ENCODE measurements at regions of chr7 and their contacts with region 1.

Region 1: DNA sequence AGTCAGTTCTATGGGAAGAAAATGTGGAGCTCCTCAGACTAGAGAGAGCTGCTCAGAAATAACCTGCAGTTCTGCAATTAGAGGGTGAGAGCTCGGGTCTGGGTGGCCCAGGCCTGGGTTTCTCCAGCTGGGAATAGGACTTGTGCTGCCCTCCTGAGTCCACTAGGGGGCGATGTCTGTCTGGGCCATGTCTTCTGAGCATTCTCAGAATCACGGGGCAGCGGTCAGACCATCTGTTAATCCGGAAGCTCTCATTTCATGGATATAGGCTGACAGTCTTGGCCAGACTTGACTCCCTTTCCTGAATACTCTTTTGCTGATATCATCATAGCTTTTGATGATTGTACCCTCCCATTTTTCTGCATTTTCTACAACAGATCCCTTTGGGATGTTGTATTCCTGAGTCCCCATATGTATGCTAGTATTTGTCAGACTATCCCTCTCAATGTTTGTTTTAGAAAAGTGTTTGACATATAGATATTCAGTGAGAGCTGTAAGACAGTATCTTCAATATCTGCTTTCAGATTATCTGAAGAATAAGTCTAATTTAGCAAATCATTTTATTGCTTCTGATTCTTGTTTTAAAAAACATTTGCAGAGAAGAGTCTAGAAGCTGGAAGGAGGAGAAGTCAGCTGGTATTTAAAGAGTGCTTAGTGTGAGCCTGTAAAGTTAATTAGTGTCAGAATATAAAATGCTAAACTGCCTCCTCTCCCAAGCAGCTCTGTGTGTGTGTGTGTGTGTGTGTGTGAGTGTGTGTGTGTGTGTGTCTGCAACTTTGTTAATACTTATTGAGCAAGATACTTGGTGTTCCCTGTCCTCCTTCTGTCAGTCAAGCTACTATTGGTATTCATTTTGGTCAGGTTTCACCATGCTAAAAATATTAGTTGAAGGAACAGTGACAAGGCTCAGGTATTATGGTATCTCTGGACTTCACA is 38.0 kb downstream of the STARD3NL start:
- DNase-seq: peak; percentile 69 to 92 (median 82)
- H3K4me3 ChIP-seq: no peak overlapping the region
- H3K27ac ChIP-seq: peak overlapping the region in 2 of 5 donors; percentile 10 to 35
- H3K4me1 ChIP-seq: peaks cover 6 to 15% of the 10 kb centered on the region in 2 donors
- H3K27me3 ChIP-seq: no peaks in the 10 kb centered on the region
- CTCF ChIP-seq: peak; percentile 70 to 92 (median 81)
- POLR2A ChIP-seq: no peak

Region 2: GRCh38 chr7:38318803-38319416 is 102.9 kb after region 1 on chr7:
- intact Hi-C with region 1: loop called in 1 of 2 experiments (anchors 5 kb)
- DNase-seq: peak in 4 of 7 donors; percentile 13 to 63 (median 32)
- H3K4me3 ChIP-seq: no peak overlapping the region
- H3K27ac ChIP-seq: no peak overlapping the region
- H3K4me1 ChIP-seq: no peaks in the 10 kb centered on the region
- H3K27me3 ChIP-seq: no peaks in the 10 kb centered on the region
- CTCF ChIP-seq: peak in 5 of 6 experiments; percentile 28 to 53 (median 46)
- POLR2A ChIP-seq: no peak

Region 3: DNA sequence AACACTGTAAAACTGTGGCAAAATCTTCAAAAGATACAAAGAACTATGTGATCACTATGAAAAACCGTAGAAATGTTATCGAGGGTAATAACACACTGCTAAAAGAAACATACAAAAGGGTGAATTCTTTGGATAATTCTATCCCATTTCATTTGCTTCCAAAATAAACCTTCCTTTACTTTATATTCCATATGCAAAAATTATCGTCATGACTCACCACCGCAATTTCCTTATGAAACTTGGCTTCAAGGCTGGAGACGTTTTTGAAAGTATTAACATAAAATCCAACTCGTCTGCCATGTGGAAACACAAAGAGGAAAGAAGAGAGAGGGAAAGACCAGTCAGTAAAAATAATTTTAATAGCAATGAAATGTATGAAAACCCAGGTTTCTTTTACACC is 250.0 kb after region 1 on chr7:
- intact Hi-C with region 1: no loop called
- DNase-seq: no peak
- H3K4me3 ChIP-seq: no peak overlapping the region
- H3K27ac ChIP-seq: no peak overlapping the region
- H3K4me1 ChIP-seq: no peaks in the 10 kb centered on the region
- H3K27me3 ChIP-seq: no peaks in the 10 kb centered on the region
- CTCF ChIP-seq: no peak
- POLR2A ChIP-seq: no peak

Measured in adrenal gland (tissue), 19 donors.